Aorta (tissue), 5 donors: ENCODE measurements at regions of chr19 and their contacts with region 1.

Region 1: DNA sequence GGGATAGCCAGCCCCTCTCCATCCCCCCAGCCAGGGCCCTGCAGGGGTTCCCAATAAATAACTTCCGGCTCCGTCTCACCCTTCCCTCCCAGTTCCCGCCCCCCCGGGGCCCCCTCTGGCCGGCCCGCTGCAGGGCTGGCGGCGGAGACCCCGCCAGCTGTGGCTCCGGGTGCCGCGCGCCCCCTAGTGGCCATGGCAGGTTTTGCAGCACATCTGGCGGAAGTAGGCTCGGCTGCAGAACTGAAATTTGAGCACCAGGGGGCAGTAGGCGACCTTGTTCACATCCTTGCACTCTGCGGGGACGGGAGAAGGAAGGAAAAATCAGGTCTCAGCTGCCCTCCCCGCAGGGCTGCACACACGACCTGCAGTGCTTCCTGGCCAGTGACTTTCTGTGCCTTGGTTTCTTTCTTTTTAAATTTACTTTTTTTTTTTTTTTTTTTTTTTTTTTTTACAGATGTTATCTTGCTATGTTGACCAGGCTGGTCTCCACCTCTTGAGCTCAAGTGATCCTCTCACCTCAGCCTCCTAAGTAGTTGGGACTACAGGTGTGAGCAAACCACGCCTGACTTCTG is 3.6 kb upstream of the MYO1F start:
- DNase-seq: peak; percentile 87 to 93
- ATAC-seq: peak; percentile 90
- H3K4me3 ChIP-seq: no peak overlapping the region
- H3K27ac ChIP-seq: no peak overlapping the region
- H3K4me1 ChIP-seq: no peaks in the 10 kb centered on the region
- H3K27me3 ChIP-seq: no peaks in the 10 kb centered on the region

Region 2: DNA sequence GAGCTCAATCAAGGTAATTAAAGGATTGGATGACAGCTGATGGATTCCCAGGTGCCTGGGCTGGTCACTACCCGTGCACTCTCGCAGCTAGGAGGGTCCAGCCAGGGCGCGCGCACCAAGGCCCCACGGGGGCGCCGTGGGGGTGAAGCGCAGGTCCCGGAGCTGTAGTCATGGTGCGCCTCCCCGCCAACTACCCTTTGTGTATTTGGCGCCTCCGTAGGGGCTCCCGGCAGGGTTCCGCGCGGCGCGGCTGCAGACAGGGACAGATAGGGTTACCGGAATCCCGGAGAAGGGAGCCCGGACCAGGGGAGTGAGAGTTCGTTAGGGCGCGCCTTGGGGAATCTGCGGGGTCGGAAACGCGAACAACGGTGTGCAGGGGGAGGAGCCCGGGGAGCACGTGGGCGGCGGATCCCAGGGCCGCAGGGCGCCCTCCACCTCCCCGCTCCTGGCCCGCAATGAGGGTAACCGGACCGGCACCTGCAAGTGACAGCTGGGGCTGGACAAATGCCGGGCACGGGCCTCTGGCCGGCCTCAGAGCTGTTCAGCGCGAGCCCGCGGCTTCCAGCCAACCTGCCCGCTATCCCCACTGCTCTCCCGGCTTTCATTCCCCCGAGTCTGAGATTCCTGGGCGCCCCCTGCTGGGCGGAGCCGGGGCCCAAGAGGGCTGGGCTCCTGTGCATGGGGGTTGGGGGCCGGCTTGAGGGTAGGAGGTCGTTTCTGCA is 75.0 kb before region 1 on chr19:
- intact Hi-C with region 1: no loop called
- DNase-seq: peak; percentile 84 to 93
- ATAC-seq: peak; percentile 90
- H3K4me3 ChIP-seq: peak overlapping the region; percentile 22 to 48
- H3K27ac ChIP-seq: no peak overlapping the region
- H3K4me1 ChIP-seq: no peaks in the 10 kb centered on the region
- H3K27me3 ChIP-seq: no peaks in the 10 kb centered on the region

Region 3: DNA sequence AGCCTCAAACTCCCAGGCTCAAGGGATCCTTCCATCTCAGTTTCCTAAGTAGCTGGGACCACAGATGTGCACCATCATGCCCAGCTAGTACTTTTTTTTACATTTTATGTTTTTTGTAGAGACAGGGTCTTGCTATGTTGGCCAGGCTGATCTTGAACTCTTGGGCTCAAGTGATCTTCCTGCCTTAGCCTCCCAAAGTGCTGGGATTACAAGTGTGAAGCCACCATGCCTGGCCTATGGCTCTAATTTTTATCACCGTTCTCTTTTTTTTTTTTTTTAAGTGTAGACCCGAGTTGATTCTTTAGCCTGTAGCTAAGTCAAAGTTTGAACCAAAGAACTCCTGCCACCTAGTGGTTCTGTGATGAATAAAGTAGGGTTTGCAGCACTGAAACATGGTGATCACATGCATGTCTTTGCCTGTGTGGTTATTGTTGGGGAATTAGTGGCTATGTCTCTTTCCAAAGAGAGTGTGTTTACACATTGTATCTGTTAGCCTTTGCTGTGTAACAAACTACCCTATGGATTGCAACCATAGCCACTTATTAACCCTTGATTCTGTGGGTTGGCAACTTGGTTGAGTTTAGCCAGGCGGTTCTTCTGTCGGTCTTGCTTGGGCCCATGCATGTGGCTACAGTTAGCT is 61.2 kb after region 1 on chr19:
- intact Hi-C with region 1: loop called (anchors 2 to 5 kb)
- DNase-seq: no peak
- ATAC-seq: no peak
- H3K4me3 ChIP-seq: no peak overlapping the region
- H3K27ac ChIP-seq: no peak overlapping the region
- H3K4me1 ChIP-seq: no peaks in the 10 kb centered on the region
- H3K27me3 ChIP-seq: no peaks in the 10 kb centered on the region